Aorta (tissue), 5 donors: ENCODE measurements at regions of chr13 and their contacts with region 1.

Region 1: GRCh38 chr13:106373989-106374572 is 161.4 kb downstream of the EFNB2 start:
- DNase-seq: no peak
- ATAC-seq: peak; percentile 28
- H3K4me3 ChIP-seq: no peak overlapping the region
- H3K27ac ChIP-seq: peak overlapping the region in 1 of 2 donors; percentile 8
- H3K4me1 ChIP-seq: peaks cover 0 to 3% of the 10 kb centered on the region in 2 donors
- H3K27me3 ChIP-seq: no peaks in the 10 kb centered on the region

Region 2: GRCh38 chr13:106314417-106314816 is 59.7 kb before region 1 on chr13:
- intact Hi-C with region 1: no loop called
- DNase-seq: no peak
- ATAC-seq: no peak
- H3K4me3 ChIP-seq: no peak overlapping the region
- H3K27ac ChIP-seq: no peak overlapping the region
- H3K4me1 ChIP-seq: no peaks in the 10 kb centered on the region
- H3K27me3 ChIP-seq: no peaks in the 10 kb centered on the region

Region 3: DNA sequence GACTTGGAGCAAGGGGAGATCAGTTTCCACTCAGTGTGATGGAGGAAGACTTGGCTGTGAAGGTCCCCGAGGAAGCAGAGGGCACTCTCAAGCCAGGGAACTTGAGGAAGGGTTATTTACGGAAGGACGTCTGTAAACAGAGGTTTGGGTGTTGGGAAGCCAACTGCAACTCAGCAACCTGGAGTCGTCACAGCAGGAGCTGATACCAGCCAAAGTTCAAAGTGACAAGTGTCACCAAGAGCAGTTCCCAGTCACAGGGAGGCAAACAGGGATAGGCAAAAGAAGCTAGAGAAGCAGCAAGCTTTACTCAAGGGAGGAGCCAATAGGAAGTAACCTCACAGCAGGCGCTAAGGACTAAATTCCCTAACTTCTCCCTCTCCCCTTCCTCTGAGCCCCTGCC is 44.1 kb before region 1 on chr13:
- intact Hi-C with region 1: no loop called
- DNase-seq: no peak
- ATAC-seq: no peak
- H3K4me3 ChIP-seq: no peak overlapping the region
- H3K27ac ChIP-seq: no peak overlapping the region
- H3K4me1 ChIP-seq: no peaks in the 10 kb centered on the region
- H3K27me3 ChIP-seq: no peaks in the 10 kb centered on the region

Region 4: DNA sequence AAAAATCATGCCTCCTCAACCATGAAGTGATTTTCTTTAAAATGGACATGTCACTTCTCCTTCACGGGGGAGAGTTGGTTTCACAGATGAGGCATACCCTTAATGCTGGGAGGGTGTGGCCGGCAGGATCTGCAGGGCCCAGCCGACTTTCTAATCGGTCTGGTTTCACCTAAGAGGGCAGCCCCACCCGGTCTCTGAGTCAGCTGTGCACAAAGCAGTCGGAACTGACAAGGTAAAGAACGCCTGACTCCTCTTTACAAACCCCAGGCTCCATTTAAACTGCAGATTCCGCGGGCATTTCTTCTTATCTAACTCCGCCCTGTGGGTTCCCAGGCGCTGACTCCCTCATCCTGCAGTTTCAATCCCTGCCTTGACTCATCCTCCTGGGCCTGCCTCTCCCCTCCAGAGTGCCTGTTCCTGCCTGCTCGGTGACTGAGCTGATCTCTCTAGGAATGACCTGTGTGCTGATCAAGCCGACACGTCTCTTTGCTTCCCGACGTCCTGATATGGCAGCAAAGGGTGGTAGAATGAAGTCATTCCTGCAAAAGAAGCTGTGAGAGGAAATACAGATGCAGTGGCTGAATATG is 98.0 kb after region 1 on chr13:
- intact Hi-C with region 1: loop called in 1 of 2 experiments (anchors 5 kb)
- DNase-seq: peak; percentile 72 to 77
- ATAC-seq: peak; percentile 47
- H3K4me3 ChIP-seq: peak overlapping the region; percentile 2 to 14
- H3K27ac ChIP-seq: peak overlapping the region in 1 of 2 donors; percentile 62
- H3K4me1 ChIP-seq: peaks cover 0 to 4% of the 10 kb centered on the region in 2 donors
- H3K27me3 ChIP-seq: no peaks in the 10 kb centered on the region

Region 5: DNA sequence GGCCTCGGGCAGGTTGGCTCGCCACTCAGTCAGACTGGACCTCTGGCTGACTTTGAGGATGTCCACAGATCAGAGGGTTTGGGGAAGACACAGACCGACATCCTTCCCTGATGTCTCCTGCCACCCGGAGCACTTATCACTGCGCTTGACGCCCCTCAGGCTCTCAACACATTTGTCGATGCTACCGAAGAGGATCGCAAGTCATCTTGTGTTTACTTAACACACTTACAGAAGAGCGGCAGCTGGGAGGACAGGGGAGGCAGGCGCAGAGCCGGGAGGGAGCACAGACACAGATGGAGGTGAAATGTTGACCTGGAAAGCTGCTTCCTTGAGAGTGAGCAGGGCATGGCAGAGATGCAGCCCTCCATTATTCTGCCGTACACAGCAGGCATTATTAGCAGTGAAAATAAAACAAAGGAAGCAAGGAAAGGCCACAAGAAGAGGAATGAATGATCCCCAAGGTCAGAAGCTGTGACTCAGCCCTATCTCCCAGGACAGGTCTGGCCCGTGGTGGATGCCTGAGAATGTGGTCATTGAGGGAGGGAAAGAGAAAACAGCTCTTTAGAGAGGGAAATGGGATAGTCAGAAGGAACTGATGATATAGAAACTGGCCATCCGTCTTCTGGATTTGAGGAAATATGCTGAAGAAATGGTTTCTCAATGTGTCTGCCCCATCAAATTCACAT is 743.4 kb after region 1 on chr13:
- intact Hi-C with region 1: no loop called
- DNase-seq: no peak
- ATAC-seq: peak; percentile 22
- H3K4me3 ChIP-seq: no peak overlapping the region
- H3K27ac ChIP-seq: no peak overlapping the region
- H3K4me1 ChIP-seq: peaks cover 0 to 2% of the 10 kb centered on the region in 2 donors
- H3K27me3 ChIP-seq: no peaks in the 10 kb centered on the region